T-cell (primary cell): ENCODE measurements at regions of chr16 and their contacts with region 1.

Region 1: DNA sequence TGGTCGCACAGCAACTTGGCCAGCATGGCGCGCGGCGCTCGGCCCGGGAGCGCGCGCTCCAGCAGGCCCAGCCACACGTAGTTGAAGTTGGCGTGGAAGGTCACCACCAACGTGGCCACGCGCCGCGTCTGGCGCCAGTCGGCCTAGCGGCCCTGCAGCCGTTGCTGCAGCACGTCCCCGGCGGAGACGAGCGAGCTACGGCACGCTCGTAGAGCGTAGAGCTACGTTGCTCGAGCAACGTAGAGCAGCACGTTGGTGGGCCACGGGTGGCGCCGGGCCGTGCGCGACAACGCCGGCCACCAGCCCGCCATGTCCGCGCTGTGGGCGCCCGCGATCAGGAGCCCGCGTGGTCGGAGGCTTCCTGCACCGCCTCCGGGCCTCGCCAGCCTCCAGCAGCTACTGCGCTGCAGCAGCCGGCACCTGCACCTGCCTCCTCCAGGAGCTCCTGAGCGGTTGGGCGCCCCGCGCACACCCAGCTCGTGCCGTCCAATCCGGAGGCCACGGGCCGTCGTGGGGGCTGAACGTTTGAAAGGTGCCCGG is 13.4 kb upstream of the SULT1A1 start:
- DNase-seq: peak; percentile 44 to 77 (median 64)
- ATAC-seq: peak; percentile 93 to 99 (median 96)
- H3K4me3 ChIP-seq: peak overlapping the region; percentile 52 to 63
- H3K4me3 Mint-ChIP-seq: peak overlapping the region; percentile 76 to 84 (median 79)
- H3K27ac ChIP-seq: no peak overlapping the region
- H3K27ac Mint-ChIP-seq: peak overlapping the region; percentile 43 to 61
- H3K4me1 ChIP-seq: peaks cover 0 to 16% of the 10 kb centered on the region in 2 experiments
- H3K4me1 Mint-ChIP-seq: peaks cover 17 to 29% (median 18%) of the 10 kb centered on the region in 3 donors
- H3K27me3 ChIP-seq: peaks cover 0 to 2% of the 10 kb centered on the region in 2 experiments
- H3K27me3 Mint-ChIP-seq: peaks cover 2 to 5% of the 10 kb centered on the region in 2 donors

Region 2: DNA sequence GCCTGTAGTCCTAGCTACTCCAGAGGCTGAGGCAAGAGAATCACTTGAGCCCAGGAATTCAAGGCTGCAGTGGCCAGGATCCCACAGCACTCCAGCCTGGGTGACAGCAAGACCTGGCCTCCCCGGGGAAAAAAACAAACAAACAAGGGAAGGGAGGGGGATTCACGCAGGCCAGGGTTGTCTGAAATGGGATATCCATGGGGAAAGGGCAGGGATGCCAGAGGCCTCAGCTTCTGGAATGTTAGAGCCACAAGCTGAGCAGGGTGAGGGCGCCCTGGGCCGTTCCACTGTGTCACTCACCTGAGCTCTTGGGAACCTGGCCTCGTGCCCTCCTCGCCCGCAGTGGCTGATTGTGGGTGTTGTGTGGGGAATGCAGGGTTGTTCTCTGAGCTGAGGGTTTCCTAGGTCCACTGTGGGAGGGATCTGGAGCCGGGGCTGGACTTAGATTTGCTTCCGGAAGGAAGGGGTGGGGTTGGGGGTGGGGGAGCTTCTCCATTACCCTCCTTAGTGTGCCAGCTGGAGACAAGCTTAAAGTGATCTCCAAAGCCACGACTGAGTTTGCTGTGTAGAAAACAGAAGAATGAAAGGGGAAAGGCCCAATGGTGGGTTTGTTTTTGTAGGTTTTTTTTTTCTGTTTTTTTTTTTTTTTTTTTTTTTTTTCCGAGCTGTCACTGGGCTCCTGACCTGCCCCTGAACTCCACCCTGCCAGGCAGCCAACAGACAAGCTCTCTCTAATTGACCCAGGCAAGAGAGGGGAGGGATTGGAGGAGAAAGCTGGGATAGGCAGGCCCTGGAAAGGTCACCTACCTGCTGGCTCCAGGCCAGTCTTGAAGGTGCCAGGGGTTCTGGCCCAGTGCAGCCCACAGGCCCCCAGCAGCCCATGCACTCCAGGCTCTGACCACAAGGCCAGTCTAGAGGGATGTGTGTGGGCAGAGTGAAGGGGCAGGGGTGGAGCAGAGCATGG is 13.3 kb before region 1 on chr16 and contains the start of gene SULT1A1:
- CTCF ChIA-PET with region 1: no interaction called
- POLR2A ChIA-PET with region 1: interaction called, 3 to 17 read pairs
- DNase-seq: peak in 2 of 35 experiments; percentile 5 to 14
- ATAC-seq: no peak
- H3K4me3 ChIP-seq: no peak within 1 kb of the TSS
- H3K4me3 Mint-ChIP-seq: peak within 1 kb of the TSS in 1 of 3 donors; percentile 52
- H3K27ac ChIP-seq: no peak within 1 kb of the TSS
- H3K27ac Mint-ChIP-seq: peak within 1 kb of the TSS; percentile 52 to 59
- H3K4me1 ChIP-seq: peaks cover 2 to 7% of the 10 kb centered on the region in 2 experiments
- H3K4me1 Mint-ChIP-seq: peaks cover 12 to 23% (median 16%) of the 10 kb centered on the region in 3 donors
- H3K27me3 ChIP-seq: no peaks in the 10 kb centered on the region
- H3K27me3 Mint-ChIP-seq: no peaks in the 10 kb centered on the region
- total RNA-seq, gene SULT1A1: 13.3 to 19.0 (median 15.8) TPM

Region 3: GRCh38 chr16:28835867-28836744 is 212.9 kb after region 1 on chr16:
- CTCF ChIA-PET with region 1: no interaction called
- POLR2A ChIA-PET with region 1: no interaction called
- DNase-seq: no peak
- ATAC-seq: peak in 1 of 4 experiments; percentile 10
- H3K4me3 ChIP-seq: no peak overlapping the region
- H3K4me3 Mint-ChIP-seq: no peak overlapping the region
- H3K27ac ChIP-seq: no peak overlapping the region
- H3K27ac Mint-ChIP-seq: no peak overlapping the region
- H3K4me1 ChIP-seq: no peaks in the 10 kb centered on the region
- H3K4me1 Mint-ChIP-seq: peaks cover 1 to 6% (median 6%) of the 10 kb centered on the region in 3 donors
- H3K27me3 ChIP-seq: no peaks in the 10 kb centered on the region
- H3K27me3 Mint-ChIP-seq: no peaks in the 10 kb centered on the region

Region 4: GRCh38 chr16:28981517-28981916 is 358.3 kb after region 1 on chr16:
- CTCF ChIA-PET with region 1: no interaction called
- POLR2A ChIA-PET with region 1: no interaction called
- DNase-seq: peak in 4 of 35 experiments; percentile 20 to 45 (median 32)
- ATAC-seq: no peak
- H3K4me3 ChIP-seq: no peak overlapping the region
- H3K4me3 Mint-ChIP-seq: no peak overlapping the region
- H3K27ac ChIP-seq: no peak overlapping the region
- H3K27ac Mint-ChIP-seq: peak overlapping the region in 1 of 2 donors; percentile 34
- H3K4me1 ChIP-seq: peaks cover 11 to 49% of the 10 kb centered on the region in 2 experiments
- H3K4me1 Mint-ChIP-seq: peaks cover 38 to 53% (median 45%) of the 10 kb centered on the region in 3 donors
- H3K27me3 ChIP-seq: no peaks in the 10 kb centered on the region
- H3K27me3 Mint-ChIP-seq: no peaks in the 10 kb centered on the region